Mammary epithelial cell (primary cell): ENCODE measurements at regions of chr6 and their contacts with region 1.

Region 1: GRCh38 chr6:42142118-42142931 is at the start of gene C6orf132:
- DNase-seq: peak; percentile 74
- H3K4me3 ChIP-seq: peak within 1 kb of the TSS; percentile 87 to 96 (median 89)
- H3K27ac ChIP-seq: peak within 1 kb of the TSS; percentile 90
- H3K4me1 ChIP-seq: peaks cover 43% of the 10 kb centered on the region
- H3K27me3 ChIP-seq: no peaks in the 10 kb centered on the region
- CTCF ChIP-seq: peak in 1 of 2 donors; percentile 9
- total RNA-seq, gene C6orf132: 10.3 to 42.4 TPM

Region 2: GRCh38 chr6:42075159-42075838 is 67.0 kb before region 1 on chr6:
- CTCF ChIA-PET with region 1: no interaction called
- dilution Hi-C with region 1: no loop called
- in situ Hi-C with region 1: no loop called
- intact Hi-C with region 1: loop called (anchors 2 kb)
- DNase-seq: peak; percentile 67
- H3K4me3 ChIP-seq: no peak overlapping the region
- H3K27ac ChIP-seq: no peak overlapping the region
- H3K4me1 ChIP-seq: no peaks in the 10 kb centered on the region
- H3K27me3 ChIP-seq: no peaks in the 10 kb centered on the region
- CTCF ChIP-seq: peak; percentile 91 to 94

Region 3: DNA sequence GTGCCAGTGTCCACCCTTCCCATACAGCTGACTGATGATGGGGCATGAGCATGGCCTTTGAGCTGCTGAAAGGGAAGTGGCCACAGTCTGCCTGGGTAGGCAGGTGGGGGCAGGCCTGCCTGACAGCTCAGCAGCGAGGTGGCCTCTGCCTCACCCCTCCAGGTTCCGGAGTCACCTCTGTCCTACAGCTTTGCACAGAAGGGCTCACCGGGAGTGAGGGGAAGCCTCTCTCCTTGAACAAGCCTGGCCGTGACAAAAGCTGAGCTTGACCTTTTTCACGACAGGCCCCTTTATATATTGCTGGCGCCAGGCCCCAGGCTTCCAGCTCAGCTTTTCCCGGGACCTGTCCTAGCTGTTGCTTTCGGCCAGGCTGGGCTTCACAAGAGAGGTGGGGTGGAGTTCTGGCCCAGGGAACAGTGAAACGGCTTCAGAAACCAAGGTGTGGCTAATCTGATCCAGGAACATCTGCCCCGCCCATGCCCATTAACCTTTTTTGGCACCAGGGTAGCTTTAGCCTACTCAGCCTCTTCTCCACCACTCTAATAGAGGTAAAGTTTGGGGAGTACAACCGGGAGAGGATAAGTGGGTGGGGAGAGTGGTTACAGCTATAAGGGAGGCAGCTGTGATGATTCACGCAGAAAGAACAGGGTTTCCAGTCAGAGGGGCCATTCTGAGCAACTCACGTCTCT is 42.8 kb before region 1 on chr6:
- CTCF ChIA-PET with region 1: no interaction called
- dilution Hi-C with region 1: no loop called
- in situ Hi-C with region 1: no loop called
- intact Hi-C with region 1: loop called (anchors 1 kb)
- DNase-seq: peak; percentile 96
- H3K4me3 ChIP-seq: peak overlapping the region in 1 of 3 experiments; percentile 20
- H3K27ac ChIP-seq: peak overlapping the region; percentile 90
- H3K4me1 ChIP-seq: peaks cover 29% of the 10 kb centered on the region
- H3K27me3 ChIP-seq: no peaks in the 10 kb centered on the region
- CTCF ChIP-seq: no peak

Region 4: DNA sequence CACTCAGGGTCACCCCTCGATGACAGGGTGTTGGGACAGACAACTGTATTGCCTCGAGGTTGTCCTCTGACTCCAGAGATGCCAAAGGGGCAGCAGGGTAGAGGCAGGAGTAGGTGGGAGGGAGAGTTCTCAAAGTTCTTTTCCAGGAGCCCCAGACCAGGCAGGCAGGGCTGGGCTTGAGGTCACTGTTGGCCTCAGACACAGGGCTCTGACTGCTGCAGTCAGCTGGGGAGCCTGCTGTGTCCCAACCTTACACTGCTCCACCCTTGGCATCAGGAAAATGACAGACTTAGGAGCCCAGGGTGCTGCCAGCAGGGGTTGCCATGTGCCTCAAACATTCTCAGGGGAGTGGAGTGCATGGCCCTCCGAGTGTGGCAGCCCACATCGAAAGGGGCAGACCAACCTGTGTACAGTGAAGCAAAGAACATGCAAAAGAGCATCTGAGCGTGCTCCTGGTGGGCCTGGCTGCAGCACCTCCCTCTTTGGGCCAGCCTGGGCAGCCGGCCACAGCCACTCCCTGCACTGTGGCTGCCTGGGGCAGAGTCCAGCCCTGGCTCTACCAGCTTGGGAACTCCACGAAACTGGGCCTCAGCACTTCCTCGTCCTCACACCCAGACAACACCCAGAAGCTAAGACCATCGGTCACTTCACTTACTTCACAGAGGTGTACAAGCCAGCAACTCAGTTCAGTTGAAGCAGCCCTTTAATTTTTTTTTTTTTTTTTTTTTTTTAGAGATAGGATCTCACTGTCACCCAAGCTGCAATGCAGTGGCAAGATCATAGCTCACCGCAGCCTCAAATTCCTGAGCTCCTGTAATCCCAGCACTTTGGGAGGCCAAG is 23.9 kb before region 1 on chr6:
- CTCF ChIA-PET with region 1: no interaction called
- dilution Hi-C with region 1: no loop called
- in situ Hi-C with region 1: no loop called
- intact Hi-C with region 1: loop called (anchors 1 kb)
- DNase-seq: peak; percentile 85
- H3K4me3 ChIP-seq: no peak overlapping the region
- H3K27ac ChIP-seq: peak overlapping the region; percentile 29
- H3K4me1 ChIP-seq: peaks cover 49% of the 10 kb centered on the region
- H3K27me3 ChIP-seq: no peaks in the 10 kb centered on the region
- CTCF ChIP-seq: no peak

Region 5: GRCh38 chr6:42217519-42218367 is 75.4 kb after region 1 on chr6 and contains the start of gene MRPS10:
- CTCF ChIA-PET with region 1: no interaction called
- dilution Hi-C with region 1: no loop called
- in situ Hi-C with region 1: no loop called
- intact Hi-C with region 1: loop called (anchors 2 kb)
- DNase-seq: peak; percentile 90
- H3K4me3 ChIP-seq: peak within 1 kb of the TSS; percentile 78 to 100 (median 80)
- H3K27ac ChIP-seq: peak within 1 kb of the TSS; percentile 83
- H3K4me1 ChIP-seq: peaks cover 27% of the 10 kb centered on the region
- H3K27me3 ChIP-seq: no peaks in the 10 kb centered on the region
- CTCF ChIP-seq: no peak
- total RNA-seq, gene MRPS10: 41.2 to 50.9 TPM

Region 6: GRCh38 chr6:42239351-42240055 is 97.2 kb after region 1 on chr6:
- CTCF ChIA-PET with region 1: no interaction called
- dilution Hi-C with region 1: loop called (anchors 5 kb)
- in situ Hi-C with region 1: no loop called
- intact Hi-C with region 1: no loop called
- DNase-seq: peak; percentile 81
- H3K4me3 ChIP-seq: no peak overlapping the region
- H3K27ac ChIP-seq: peak overlapping the region; percentile 47
- H3K4me1 ChIP-seq: peaks cover 26% of the 10 kb centered on the region
- H3K27me3 ChIP-seq: no peaks in the 10 kb centered on the region
- CTCF ChIP-seq: no peak